Right ventricle myocardium inferior (tissue), 1 donor: ENCODE measurements at regions of chr6 and their contacts with region 1.

Region 1: GRCh38 chr6:146277142-146277541 is 248.3 kb downstream of the GRM1 start:
- DNase-seq: no peak
- ATAC-seq: no peak

Region 2: GRCh38 chr6:145948328-145948727 is 328.8 kb before region 1 on chr6:
- intact Hi-C with region 1: no loop called
- DNase-seq: no peak
- ATAC-seq: no peak

Region 3: GRCh38 chr6:145963216-145964068 is 313.7 kb before region 1 on chr6:
- intact Hi-C with region 1: loop called (anchors 10 kb)
- DNase-seq: peak; percentile 78
- ATAC-seq: peak; percentile 33

Region 4: DNA sequence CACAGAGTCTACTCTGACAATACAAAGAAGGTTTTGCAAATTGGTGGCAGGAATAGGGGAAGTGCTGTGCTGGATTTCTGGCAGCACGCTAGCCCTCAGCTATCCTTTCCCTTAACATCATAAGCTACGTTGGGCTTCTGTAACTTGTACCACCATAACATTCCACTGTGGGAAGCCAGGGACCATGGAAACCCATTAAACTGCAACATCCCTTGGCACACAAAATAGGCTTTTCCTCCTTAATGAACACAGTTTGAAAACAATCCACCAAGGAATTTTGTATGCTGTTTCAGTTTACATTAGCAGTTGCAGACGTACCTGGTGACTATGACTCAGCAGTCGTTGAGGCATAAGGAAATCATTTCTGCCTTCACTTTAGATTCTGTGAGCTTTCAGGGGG is 62.6 kb after region 1 on chr6:
- intact Hi-C with region 1: no loop called
- DNase-seq: no peak
- ATAC-seq: no peak